ENCODE measurements at regions of chr5 and their contacts with region 1.

Region 1: DNA sequence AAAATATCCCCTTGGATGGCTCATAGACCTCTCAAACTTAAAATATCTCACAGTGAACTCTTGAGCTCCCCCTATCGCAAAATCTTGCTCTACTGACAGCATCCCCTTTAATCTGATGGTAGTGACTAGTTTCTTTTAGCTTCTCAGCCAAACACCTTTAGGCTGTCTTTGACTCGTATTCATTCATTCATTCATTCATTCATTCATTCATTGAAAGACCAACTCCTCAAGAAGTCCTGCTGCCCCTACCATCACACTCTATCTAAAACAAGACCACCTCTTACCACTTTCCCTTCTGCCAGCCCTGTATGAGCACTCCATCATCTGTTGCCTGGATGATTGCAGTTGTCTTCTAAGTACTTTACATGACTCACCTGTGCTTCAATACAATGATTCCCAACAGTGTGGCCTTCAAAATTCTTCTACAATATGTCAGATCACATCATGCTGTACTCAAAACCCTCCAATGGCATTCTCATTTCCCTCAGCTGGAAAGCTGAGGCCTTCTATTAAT is 46.8 kb downstream of the ITGA2 start:
- DNase-seq: peak in 1 of 2 experiments; percentile 24
- H3K4me3 ChIP-seq: no peak overlapping the region
- H3K4me3 Mint-ChIP-seq: no peak overlapping the region
- H3K27ac Mint-ChIP-seq: peak overlapping the region; percentile 20
- H3K4me1 ChIP-seq: peaks cover 41% of the 10 kb centered on the region
- H3K4me1 Mint-ChIP-seq: peaks cover 35% of the 10 kb centered on the region
- H3K27me3 ChIP-seq: no peaks in the 10 kb centered on the region
- H3K27me3 Mint-ChIP-seq: no peaks in the 10 kb centered on the region
- CTCF ChIP-seq: peak; percentile 37 to 53

Region 2: GRCh38 chr5:52948418-52949076 is 87.4 kb before region 1 on chr5:
- CTCF ChIA-PET with region 1: interaction called, 6 read pairs
- POLR2A ChIA-PET with region 1: no interaction called
- intact Hi-C with region 1: loop called (anchors 2 kb)
- DNase-seq: peak; percentile 75 to 76
- H3K4me3 ChIP-seq: no peak overlapping the region
- H3K4me3 Mint-ChIP-seq: no peak overlapping the region
- H3K27ac Mint-ChIP-seq: no peak overlapping the region
- H3K4me1 ChIP-seq: peaks cover 8% of the 10 kb centered on the region; the same call in 1 of the 2 replicates
- H3K4me1 Mint-ChIP-seq: peaks cover 7% of the 10 kb centered on the region
- H3K27me3 ChIP-seq: no peaks in the 10 kb centered on the region
- H3K27me3 Mint-ChIP-seq: no peaks in the 10 kb centered on the region
- CTCF ChIP-seq: peak; percentile 78 to 86

Region 3: DNA sequence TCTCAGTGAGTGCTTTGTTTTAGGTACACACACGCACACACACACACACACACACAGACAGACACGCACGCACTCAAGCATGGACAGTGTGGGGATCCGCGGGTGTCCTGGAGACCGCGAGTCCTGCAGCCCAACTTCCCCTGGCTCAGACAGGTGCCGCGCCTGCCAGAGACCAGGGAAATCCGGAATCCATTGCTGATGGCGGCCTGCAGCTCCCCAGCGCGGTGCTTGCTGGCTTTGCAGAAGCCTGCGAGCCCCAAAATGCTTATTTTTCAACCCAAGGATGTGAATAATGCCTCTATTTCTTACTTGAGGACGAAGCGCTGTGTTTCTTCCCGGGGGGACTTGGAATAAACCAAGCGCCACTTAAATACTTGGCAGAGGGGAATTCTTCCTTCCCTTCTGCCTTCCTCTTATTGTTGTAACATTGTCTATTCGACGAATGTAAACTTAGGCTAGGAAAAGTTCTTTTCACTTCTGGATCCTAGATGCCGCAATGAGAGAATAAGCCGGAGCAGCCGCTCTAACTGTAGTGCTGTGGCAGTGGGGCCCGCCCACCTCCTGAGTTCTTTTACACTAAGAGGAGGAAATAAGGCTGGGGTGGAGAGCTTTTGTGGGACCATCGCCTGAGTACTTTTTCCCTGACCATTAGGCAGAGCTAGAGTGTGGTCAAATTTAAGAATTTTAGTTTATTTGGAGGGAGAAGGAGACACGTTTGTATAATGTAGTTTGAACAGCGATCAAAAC is 46.0 kb before region 1 on chr5:
- CTCF ChIA-PET with region 1: interaction called, 3 read pairs
- POLR2A ChIA-PET with region 1: no interaction called
- intact Hi-C with region 1: loop called (anchors 5 kb)
- DNase-seq: peak; percentile 65 to 68
- H3K4me3 ChIP-seq: peak overlapping the region; percentile 56
- H3K4me3 Mint-ChIP-seq: peak overlapping the region; percentile 85
- H3K27ac Mint-ChIP-seq: peak overlapping the region; percentile 60
- H3K4me1 ChIP-seq: peaks cover 22% of the 10 kb centered on the region
- H3K4me1 Mint-ChIP-seq: peaks cover 34% of the 10 kb centered on the region
- H3K27me3 ChIP-seq: no peaks in the 10 kb centered on the region
- H3K27me3 Mint-ChIP-seq: no peaks in the 10 kb centered on the region
- CTCF ChIP-seq: peak; percentile 25 to 67

Region 4: DNA sequence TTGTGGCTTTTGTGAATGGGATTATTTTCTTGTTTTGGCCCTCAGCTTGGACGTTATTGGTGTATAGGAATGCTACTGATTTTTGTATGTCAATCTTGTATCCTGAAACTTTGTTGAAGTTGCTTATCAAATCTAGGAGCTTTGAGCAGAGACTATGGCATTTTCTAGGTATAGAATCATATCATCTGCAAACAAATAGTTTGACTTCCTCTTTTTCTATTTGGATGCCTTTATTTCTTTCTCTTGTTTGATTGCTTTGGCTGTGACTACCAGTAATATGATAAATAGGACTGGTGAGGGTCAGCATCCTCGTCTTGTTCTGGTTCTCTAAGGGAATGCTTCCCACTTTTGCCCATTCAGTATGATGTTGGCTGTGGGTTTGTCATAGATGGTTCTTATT is 22.1 kb before region 1 on chr5:
- CTCF ChIA-PET with region 1: no interaction called
- POLR2A ChIA-PET with region 1: no interaction called
- intact Hi-C with region 1: loop called (anchors 2 kb)
- DNase-seq: no peak
- H3K4me3 ChIP-seq: no peak overlapping the region
- H3K4me3 Mint-ChIP-seq: no peak overlapping the region
- H3K27ac Mint-ChIP-seq: no peak overlapping the region
- H3K4me1 ChIP-seq: no peaks in the 10 kb centered on the region
- H3K4me1 Mint-ChIP-seq: peaks cover 11% of the 10 kb centered on the region
- H3K27me3 ChIP-seq: no peaks in the 10 kb centered on the region; the same call in 1 of the 2 replicates
- H3K27me3 Mint-ChIP-seq: no peaks in the 10 kb centered on the region
- CTCF ChIP-seq: no peak

Region 5: GRCh38 chr5:53052499-53052898 is 16.6 kb after region 1 on chr5:
- CTCF ChIA-PET with region 1: no interaction called
- POLR2A ChIA-PET with region 1: no interaction called
- intact Hi-C with region 1: no loop called
- DNase-seq: no peak
- H3K4me3 ChIP-seq: no peak overlapping the region
- H3K4me3 Mint-ChIP-seq: no peak overlapping the region
- H3K27ac Mint-ChIP-seq: no peak overlapping the region
- H3K4me1 ChIP-seq: no peaks in the 10 kb centered on the region
- H3K4me1 Mint-ChIP-seq: no peaks in the 10 kb centered on the region
- H3K27me3 ChIP-seq: no peaks in the 10 kb centered on the region
- H3K27me3 Mint-ChIP-seq: no peaks in the 10 kb centered on the region
- CTCF ChIP-seq: no peak

Measured in Caco-2 (cell line).